CD4-positive, alpha-beta T cell (primary cell): ENCODE measurements at regions of chr10 and their contacts with region 1.

Region 1: DNA sequence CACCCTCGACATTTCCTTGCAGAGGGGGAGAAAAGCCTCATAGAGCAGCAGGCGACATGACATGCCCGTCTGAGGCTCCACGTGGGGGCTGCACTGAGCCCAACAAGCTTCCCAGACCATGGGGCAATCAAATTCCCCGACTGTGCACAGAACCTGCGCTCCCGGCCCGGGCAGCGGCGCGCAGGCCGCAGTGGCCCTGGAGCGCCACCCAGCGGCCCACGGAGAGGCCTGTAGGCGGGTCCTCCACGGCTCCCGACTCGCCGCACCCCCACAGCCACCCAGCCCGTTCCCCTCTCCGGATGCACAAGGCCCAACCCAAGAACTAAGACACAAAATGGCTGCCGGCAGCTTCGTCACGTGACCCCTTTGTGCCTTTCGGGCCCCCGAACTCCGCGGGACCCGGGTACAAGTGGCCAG is 816 bp downstream of the EPC1 start:
- DNase-seq: peak; percentile 91 to 98 (median 95)
- ATAC-seq: peak; percentile 82
- H3K4me3 ChIP-seq: peak overlapping the region; percentile 98
- H3K4me3 Mint-ChIP-seq: peak overlapping the region; percentile 97
- H3K27ac ChIP-seq: peak overlapping the region; percentile 99 to 100
- H3K27ac Mint-ChIP-seq: peak overlapping the region; percentile 100
- H3K4me1 ChIP-seq: peaks cover 27% of the 10 kb centered on the region
- H3K4me1 Mint-ChIP-seq: peaks cover 85% of the 10 kb centered on the region
- H3K27me3 ChIP-seq: no peaks in the 10 kb centered on the region
- H3K27me3 Mint-ChIP-seq: no peaks in the 10 kb centered on the region
- CTCF ChIP-seq: peak; percentile 94

Region 2: DNA sequence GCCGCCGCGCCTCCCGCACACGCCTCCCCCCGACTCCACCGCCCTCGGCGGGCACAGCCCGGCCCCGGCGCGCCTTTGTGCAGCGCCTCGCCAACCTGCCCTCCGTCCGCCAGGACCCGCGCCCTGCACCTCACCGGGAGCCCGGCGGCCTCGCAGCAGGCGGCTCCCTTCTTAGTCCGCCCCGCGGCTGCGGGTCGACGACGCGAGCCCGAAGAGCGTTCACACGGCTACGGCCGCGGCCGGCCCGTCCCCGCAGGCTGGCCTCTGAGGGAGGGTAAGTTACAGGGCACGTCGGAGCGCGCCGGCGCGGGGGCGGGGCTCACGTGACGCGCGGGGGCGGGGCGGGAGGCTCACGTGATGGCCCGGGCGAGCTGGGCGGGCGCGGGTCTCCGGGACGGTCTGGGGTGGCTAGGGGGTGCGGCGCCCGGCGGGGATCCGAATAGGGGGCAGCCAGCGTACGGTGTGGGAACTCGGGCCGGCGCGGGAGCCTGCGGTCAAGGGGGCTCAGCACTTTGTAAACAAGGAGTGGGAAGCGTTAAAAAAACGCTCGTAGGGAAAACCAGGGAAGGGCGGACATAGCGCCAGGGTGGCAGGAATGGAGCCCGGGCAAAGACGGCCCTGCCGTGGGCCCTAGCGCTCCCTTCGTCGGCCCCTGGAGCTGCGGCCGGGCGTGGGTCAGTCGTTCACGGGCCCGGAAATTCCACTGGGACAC is 417.4 kb before region 1 on chr10 and contains the start of gene ARHGAP12:
- CTCF ChIA-PET with region 1: no interaction called
- POLR2A ChIA-PET with region 1: no interaction called
- intact Hi-C with region 1: loop called (anchors 10 kb)
- DNase-seq: peak; percentile 70 to 92 (median 82)
- ATAC-seq: peak; percentile 63
- H3K4me3 ChIP-seq: peak within 1 kb of the TSS; percentile 99
- H3K4me3 Mint-ChIP-seq: peak within 1 kb of the TSS; percentile 97
- H3K27ac ChIP-seq: peak within 1 kb of the TSS; percentile 69 to 77
- H3K27ac Mint-ChIP-seq: peak within 1 kb of the TSS; percentile 82
- H3K4me1 ChIP-seq: peaks cover 23% of the 10 kb centered on the region
- H3K4me1 Mint-ChIP-seq: peaks cover 53% of the 10 kb centered on the region
- H3K27me3 ChIP-seq: no peaks in the 10 kb centered on the region
- H3K27me3 Mint-ChIP-seq: no peaks in the 10 kb centered on the region
- CTCF ChIP-seq: no peak
- total RNA-seq, gene ARHGAP12: 40.3 to 41.1 TPM

Region 3: GRCh38 chr10:32256613-32257437 is 89.3 kb before region 1 on chr10:
- CTCF ChIA-PET with region 1: interaction called, 13 read pairs
- POLR2A ChIA-PET with region 1: interaction called, 5 read pairs
- intact Hi-C with region 1: loop called (anchors 1 kb)
- DNase-seq: peak; percentile 43 to 84 (median 62)
- ATAC-seq: peak; percentile 78
- H3K4me3 ChIP-seq: no peak overlapping the region
- H3K4me3 Mint-ChIP-seq: no peak overlapping the region
- H3K27ac ChIP-seq: no peak overlapping the region
- H3K27ac Mint-ChIP-seq: no peak overlapping the region
- H3K4me1 ChIP-seq: peaks cover 9% of the 10 kb centered on the region
- H3K4me1 Mint-ChIP-seq: peaks cover 5% of the 10 kb centered on the region
- H3K27me3 ChIP-seq: no peaks in the 10 kb centered on the region
- H3K27me3 Mint-ChIP-seq: no peaks in the 10 kb centered on the region
- CTCF ChIP-seq: peak; percentile 92

Region 4: GRCh38 chr10:32308027-32308603 is 38.0 kb before region 1 on chr10:
- CTCF ChIA-PET with region 1: interaction called, 6 read pairs
- POLR2A ChIA-PET with region 1: interaction called, 4 read pairs
- intact Hi-C with region 1: loop called (anchors 5 kb)
- DNase-seq: peak in 4 of 14 experiments; percentile 9 to 48 (median 36)
- ATAC-seq: peak; percentile 70
- H3K4me3 ChIP-seq: no peak overlapping the region
- H3K4me3 Mint-ChIP-seq: peak overlapping the region; percentile 76
- H3K27ac ChIP-seq: peak overlapping the region; percentile 2 to 5
- H3K27ac Mint-ChIP-seq: peak overlapping the region; percentile 80
- H3K4me1 ChIP-seq: peaks cover 18% of the 10 kb centered on the region
- H3K4me1 Mint-ChIP-seq: peaks cover 85% of the 10 kb centered on the region
- H3K27me3 ChIP-seq: no peaks in the 10 kb centered on the region
- H3K27me3 Mint-ChIP-seq: no peaks in the 10 kb centered on the region
- CTCF ChIP-seq: no peak

Region 5: GRCh38 chr10:32332299-32332750 is 13.8 kb before region 1 on chr10:
- CTCF ChIA-PET with region 1: interaction called, 17 read pairs
- POLR2A ChIA-PET with region 1: interaction called, 44 read pairs
- intact Hi-C with region 1: loop called in 1 of 2 experiments (anchors 1 kb)
- DNase-seq: peak; percentile 30 to 92 (median 56)
- ATAC-seq: peak; percentile 93
- H3K4me3 ChIP-seq: peak overlapping the region; percentile 2
- H3K4me3 Mint-ChIP-seq: peak overlapping the region; percentile 73
- H3K27ac ChIP-seq: no peak overlapping the region
- H3K27ac Mint-ChIP-seq: peak overlapping the region; percentile 87
- H3K4me1 ChIP-seq: peaks cover 61% of the 10 kb centered on the region
- H3K4me1 Mint-ChIP-seq: peaks cover 96% of the 10 kb centered on the region
- H3K27me3 ChIP-seq: no peaks in the 10 kb centered on the region
- H3K27me3 Mint-ChIP-seq: no peaks in the 10 kb centered on the region
- CTCF ChIP-seq: no peak

Region 6: GRCh38 chr10:32367793-32368453 is 21.8 kb after region 1 on chr10:
- CTCF ChIA-PET with region 1: interaction called, 12 read pairs
- POLR2A ChIA-PET with region 1: interaction called, 93 read pairs
- intact Hi-C with region 1: loop called in 1 of 2 experiments (anchors 2 kb)
- DNase-seq: peak; percentile 63 to 89 (median 72)
- ATAC-seq: peak; percentile 75
- H3K4me3 ChIP-seq: no peak overlapping the region
- H3K4me3 Mint-ChIP-seq: peak overlapping the region; percentile 26
- H3K27ac ChIP-seq: peak overlapping the region in 1 of 2 donors; percentile 38
- H3K27ac Mint-ChIP-seq: peak overlapping the region; percentile 58
- H3K4me1 ChIP-seq: peaks cover 55% of the 10 kb centered on the region
- H3K4me1 Mint-ChIP-seq: peaks cover 72% of the 10 kb centered on the region
- H3K27me3 ChIP-seq: no peaks in the 10 kb centered on the region
- H3K27me3 Mint-ChIP-seq: no peaks in the 10 kb centered on the region
- CTCF ChIP-seq: peak; percentile 92

Region 7: DNA sequence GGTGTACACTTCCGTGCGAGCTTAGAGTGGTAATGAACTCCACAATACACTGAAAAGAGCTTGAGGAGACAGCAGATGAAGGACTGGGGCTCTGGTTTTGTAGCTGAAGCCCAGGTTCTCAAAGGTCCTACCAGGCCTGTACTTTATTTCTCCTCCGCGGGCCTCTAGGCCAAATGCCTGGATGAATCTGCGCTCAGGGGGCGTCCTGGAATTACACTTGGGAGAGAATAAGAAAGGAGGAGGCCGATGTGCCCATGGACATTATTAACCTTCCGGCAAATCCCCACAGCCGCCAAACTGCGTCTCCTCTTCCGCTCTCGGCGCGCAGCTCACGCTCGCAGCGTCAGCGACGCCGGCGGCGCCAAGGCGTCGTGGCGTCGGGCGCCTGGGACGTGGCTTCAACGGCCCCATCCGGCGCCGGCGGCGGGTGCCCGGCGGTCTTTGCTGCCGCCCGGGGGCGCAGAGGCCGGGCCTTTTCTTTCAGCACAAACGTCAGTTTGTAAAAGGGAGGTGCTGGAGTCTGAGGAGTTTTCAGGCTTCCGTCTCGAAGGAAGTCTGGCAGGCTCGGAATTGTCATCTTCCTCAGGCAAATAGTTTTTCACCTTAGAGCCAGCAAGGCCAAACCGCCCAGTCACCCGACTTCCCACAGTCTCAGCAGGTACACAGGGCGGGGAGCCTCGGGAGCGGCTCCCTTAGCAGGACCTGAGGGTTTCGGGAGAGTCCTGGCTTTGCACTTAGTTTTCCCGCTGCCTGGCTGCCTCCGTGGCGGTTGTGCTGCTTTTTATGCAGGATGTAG is 99.8 kb after region 1 on chr10 and contains the start of gene CCDC7:
- CTCF ChIA-PET with region 1: interaction called, 3 read pairs
- POLR2A ChIA-PET with region 1: interaction called, 12 read pairs
- intact Hi-C with region 1: loop called in 1 of 2 experiments (anchors 1 kb)
- DNase-seq: peak; percentile 74 to 96 (median 82)
- ATAC-seq: peak; percentile 95
- H3K4me3 ChIP-seq: peak within 1 kb of the TSS; percentile 96
- H3K4me3 Mint-ChIP-seq: peak within 1 kb of the TSS; percentile 94
- H3K27ac ChIP-seq: peak within 1 kb of the TSS; percentile 92 to 95
- H3K27ac Mint-ChIP-seq: peak within 1 kb of the TSS; percentile 97
- H3K4me1 ChIP-seq: peaks cover 8% of the 10 kb centered on the region
- H3K4me1 Mint-ChIP-seq: peaks cover 33% of the 10 kb centered on the region
- H3K27me3 ChIP-seq: no peaks in the 10 kb centered on the region
- H3K27me3 Mint-ChIP-seq: no peaks in the 10 kb centered on the region
- CTCF ChIP-seq: peak; percentile 64
- total RNA-seq, gene CCDC7: 69.4 to 72.9 TPM